Panc1 (cell line): ENCODE measurements at regions of chr22 and their contacts with region 1.

Region 1: DNA sequence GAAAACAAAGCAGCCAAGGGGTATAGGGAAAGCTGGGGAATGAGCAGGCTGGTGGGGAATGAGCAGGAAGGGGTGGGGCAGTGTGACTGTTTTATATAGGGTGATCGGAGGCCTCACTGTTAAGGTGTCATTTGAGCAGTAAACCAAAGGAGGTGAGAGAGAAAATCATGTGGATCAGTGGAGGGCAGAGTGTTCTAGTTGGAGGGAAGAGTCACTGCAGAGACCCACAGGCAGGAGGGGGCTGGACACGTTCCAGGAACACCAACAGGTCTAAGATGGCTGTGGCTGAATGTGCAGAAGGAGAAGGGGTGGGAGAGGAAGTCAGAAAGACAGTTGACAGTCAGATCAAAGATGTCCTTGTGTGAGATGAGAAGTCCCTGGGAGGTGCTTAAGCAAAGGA is 103.8 kb downstream of the ENTHD1 start:
- DNase-seq: no peak
- ATAC-seq: no peak
- H3K4me3 ChIP-seq: no peak overlapping the region
- H3K27ac ChIP-seq: no peak overlapping the region
- H3K4me1 ChIP-seq: no peaks in the 10 kb centered on the region
- H3K27me3 ChIP-seq: no peaks in the 10 kb centered on the region
- CTCF ChIP-seq: no peak

Region 2: GRCh38 chr22:39808081-39808480 is 18.3 kb after region 1 on chr22:
- CTCF ChIA-PET with region 1: interaction called, 10 read pairs
- POLR2A ChIA-PET with region 1: no interaction called
- in situ Hi-C with region 1: no loop called
- intact Hi-C with region 1: no loop called
- DNase-seq: no peak
- ATAC-seq: no peak
- H3K4me3 ChIP-seq: no peak overlapping the region
- H3K27ac ChIP-seq: no peak overlapping the region
- H3K4me1 ChIP-seq: no peaks in the 10 kb centered on the region
- H3K27me3 ChIP-seq: peaks cover 5% of the 10 kb centered on the region
- CTCF ChIP-seq: peak; percentile 55